Activated T-helper 1 cell treated with anti-CD3 and anti-CD28 coated beads, Interleukin-12 subunit alpha, Interleukin-12 subunit beta, Interleukin-2, Interleukin-4 antibody, amounts not matched to agents 30 ng/mL and 10 ng/mL and 1 ng/mL, durations not matched to agents 14 hours and 24 hours and 36 hours (primary cell): ENCODE measurements at regions of chr1 and their contacts with region 1.

Region 1: GRCh38 chr1:76330991-76331603 is 256.6 kb downstream of the ST6GALNAC3 start:
- DNase-seq: peak; percentile 4
- H3K4me3 Mint-ChIP-seq: no peak overlapping the region
- H3K27ac Mint-ChIP-seq: no peak overlapping the region
- H3K4me1 Mint-ChIP-seq: peaks cover 9% of the 10 kb centered on the region
- H3K27me3 Mint-ChIP-seq: peaks cover 4% of the 10 kb centered on the region

Region 2: DNA sequence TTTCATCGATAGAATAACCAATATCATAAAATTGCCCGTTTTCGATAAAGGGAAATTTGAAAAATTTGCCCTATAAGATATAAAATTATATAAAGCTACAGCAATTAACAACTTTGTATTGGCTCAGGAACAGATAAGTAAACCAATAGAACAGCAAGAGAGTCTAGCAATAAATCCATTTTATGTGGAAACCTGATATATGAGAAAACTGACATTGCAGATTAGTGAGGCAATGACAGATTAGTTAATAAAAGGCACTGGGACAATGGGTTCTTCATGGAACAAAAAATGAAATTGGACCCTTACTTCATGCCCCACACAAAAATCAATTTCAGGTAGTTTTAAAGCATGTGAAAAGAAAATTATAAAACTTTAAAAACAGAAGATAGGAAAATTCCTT is 366.3 kb after region 1 on chr1:
- intact Hi-C with region 1: loop called (anchors 5 kb)
- DNase-seq: no peak
- H3K4me3 Mint-ChIP-seq: no peak overlapping the region
- H3K27ac Mint-ChIP-seq: no peak overlapping the region
- H3K4me1 Mint-ChIP-seq: no peaks in the 10 kb centered on the region
- H3K27me3 Mint-ChIP-seq: no peaks in the 10 kb centered on the region

Region 3: DNA sequence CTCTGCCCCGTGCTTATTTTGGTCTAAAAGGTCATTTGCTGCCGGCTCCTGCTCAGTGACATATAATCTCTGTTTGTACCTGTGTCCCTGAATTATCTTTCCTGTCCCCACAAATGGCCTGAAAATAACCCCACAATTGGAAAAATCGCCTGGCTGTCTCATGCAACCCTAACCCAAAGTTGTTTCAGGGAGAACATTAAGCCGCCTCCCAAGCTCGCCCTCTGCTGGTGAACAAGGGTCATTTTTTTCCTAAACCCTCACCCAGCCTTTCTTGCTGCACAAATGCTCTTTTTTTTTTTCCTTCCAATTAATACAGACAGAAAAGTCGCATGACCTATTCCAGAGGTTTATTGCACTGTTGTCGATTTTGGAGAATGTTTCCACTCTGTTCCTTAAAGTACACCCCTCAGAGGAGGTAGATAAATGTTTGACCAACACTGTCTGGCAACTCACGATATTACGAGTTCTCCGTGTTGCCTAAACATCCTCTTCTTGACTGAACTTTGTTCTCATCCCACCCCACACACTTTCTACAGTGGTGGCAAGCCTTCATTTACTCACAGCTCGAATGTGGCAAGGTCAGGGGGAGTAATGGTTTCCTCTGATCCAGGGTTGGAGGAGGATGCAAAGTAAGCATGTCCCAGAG is 1202.7 kb after region 1 on chr1:
- intact Hi-C with region 1: loop called (anchors 5 kb)
- DNase-seq: peak; percentile 18
- H3K4me3 Mint-ChIP-seq: no peak overlapping the region
- H3K27ac Mint-ChIP-seq: no peak overlapping the region
- H3K4me1 Mint-ChIP-seq: no peaks in the 10 kb centered on the region
- H3K27me3 Mint-ChIP-seq: no peaks in the 10 kb centered on the region